Heart left ventricle (tissue), 16 donors: ENCODE measurements at regions of chr18 and their contacts with region 1.

Region 1: DNA sequence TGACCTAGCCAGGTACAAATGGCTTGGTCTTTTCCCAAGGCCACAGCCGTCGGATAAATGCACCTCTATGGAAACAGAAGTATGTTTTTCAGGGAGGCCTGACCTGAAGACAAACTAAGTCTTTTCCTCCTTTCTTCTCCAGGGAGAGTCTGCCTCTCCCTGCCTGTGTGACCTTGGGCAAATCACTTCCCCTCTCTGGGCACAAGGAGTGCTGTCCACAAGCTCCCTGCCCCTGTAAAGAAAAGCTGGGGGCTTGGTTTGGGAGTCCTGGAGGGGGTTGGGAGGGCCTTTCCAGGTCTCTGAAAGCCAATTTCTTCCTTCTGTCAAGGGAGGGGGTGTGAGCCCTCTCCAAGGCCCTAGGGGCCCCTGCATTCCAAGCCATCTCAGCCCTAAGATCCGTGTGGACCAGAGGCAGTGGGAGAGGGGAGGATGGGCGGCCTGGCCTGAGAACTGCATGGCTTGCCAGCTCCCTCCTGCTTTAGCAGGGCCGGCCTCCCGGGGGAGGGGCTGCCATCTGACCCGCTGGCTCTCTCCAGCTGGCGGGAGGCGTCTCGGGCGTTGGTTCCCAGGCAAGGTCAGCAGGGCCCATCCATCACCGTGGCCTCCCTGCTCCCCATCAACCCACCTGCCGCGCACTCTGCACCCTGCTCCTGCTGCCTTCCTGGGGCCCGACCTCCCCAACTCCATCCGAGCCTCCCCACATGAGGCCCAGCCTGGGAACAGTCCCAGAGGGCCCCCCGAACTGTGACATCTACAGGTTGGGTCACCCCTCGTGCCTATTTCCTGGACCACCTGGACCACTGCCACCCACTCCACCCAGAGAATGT is 61.4 kb downstream of the SMAD7 start:
- DNase-seq: peak in 3 of 5 donors; percentile 61 to 67 (median 65)
- ATAC-seq: peak in 3 of 4 donors; percentile 41 to 64 (median 53)
- H3K4me3 ChIP-seq: no peak overlapping the region
- H3K27ac ChIP-seq: peak overlapping the region in 1 of 12 donors; percentile 19
- H3K4me1 ChIP-seq: peaks cover 0 to 40% (median 19%) of the 10 kb centered on the region in 12 donors
- H3K27me3 ChIP-seq: no peaks in the 10 kb centered on the region
- CTCF ChIP-seq: no peak
- POLR2A ChIP-seq: no peak

Region 2: DNA sequence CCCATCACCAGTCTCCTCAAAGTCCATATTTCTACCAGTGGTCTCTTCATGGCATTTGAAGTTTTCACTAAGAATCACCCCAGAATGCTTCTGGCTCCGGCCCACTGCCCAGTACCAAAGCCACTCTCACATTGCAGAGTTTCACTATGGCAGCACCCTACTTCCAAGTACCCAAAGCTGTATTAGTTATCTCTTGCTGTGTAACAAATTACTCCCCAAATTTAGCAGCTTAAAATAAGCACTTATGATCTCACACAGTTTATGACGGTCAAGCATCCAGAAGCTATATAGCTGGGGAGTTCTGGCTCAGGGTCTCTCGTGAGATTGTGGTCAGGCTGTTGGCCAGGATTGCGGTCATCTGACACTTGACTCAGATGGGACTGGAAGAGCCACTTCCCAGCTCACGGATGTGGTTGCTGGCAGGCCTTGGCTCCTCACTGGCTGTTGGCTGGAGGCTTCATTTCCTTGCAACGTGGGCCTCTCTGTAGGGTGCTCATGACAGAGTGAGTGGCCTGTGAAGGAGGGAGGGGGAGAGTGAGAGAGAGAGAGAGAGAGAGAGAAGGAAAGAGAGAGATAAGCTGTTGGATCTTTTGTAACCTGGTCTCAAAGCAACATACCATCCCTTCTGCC is 161.0 kb before region 1 on chr18:
- intact Hi-C with region 1: no loop called
- DNase-seq: peak in 3 of 5 donors; percentile 46 to 67 (median 53)
- ATAC-seq: peak; percentile 6 to 79 (median 71)
- H3K4me3 ChIP-seq: no peak overlapping the region
- H3K27ac ChIP-seq: peak overlapping the region in 5 of 12 donors; percentile 13 to 79 (median 67)
- H3K4me1 ChIP-seq: peaks cover 0 to 31% (median 19%) of the 10 kb centered on the region in 12 donors
- H3K27me3 ChIP-seq: no peaks in the 10 kb centered on the region
- CTCF ChIP-seq: no peak
- POLR2A ChIP-seq: no peak

Region 3: DNA sequence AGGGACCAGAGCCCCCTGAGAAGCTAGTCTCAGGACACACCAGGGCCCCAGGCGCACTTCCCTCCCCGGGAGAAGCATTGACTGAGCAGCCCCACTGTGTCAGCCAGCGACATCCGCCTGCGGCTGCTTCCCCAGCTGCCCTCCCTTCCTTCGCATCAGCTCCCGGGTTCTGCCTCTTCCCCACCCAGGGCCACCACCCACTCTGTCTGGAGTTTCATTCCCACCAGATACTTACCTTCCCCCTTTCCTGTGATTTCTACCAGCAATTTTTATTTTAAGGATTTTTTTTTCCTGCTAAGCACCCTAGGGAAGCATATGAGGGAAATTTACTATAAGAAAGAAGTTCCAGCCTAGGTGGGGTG is 37.7 kb before region 1 on chr18:
- intact Hi-C with region 1: loop called in 1 of 10 experiments (anchors 5 kb)
- DNase-seq: peak; percentile 79 to 83 (median 82)
- ATAC-seq: peak; percentile 52 to 83 (median 75)
- H3K4me3 ChIP-seq: peak overlapping the region in 3 of 12 donors; percentile 13 to 15 (median 14)
- H3K27ac ChIP-seq: peak overlapping the region; percentile 53 to 95 (median 88)
- H3K4me1 ChIP-seq: peaks cover 5 to 65% (median 43%) of the 10 kb centered on the region in 12 donors
- H3K27me3 ChIP-seq: no peaks in the 10 kb centered on the region
- CTCF ChIP-seq: no peak
- POLR2A ChIP-seq: no peak

Region 4: DNA sequence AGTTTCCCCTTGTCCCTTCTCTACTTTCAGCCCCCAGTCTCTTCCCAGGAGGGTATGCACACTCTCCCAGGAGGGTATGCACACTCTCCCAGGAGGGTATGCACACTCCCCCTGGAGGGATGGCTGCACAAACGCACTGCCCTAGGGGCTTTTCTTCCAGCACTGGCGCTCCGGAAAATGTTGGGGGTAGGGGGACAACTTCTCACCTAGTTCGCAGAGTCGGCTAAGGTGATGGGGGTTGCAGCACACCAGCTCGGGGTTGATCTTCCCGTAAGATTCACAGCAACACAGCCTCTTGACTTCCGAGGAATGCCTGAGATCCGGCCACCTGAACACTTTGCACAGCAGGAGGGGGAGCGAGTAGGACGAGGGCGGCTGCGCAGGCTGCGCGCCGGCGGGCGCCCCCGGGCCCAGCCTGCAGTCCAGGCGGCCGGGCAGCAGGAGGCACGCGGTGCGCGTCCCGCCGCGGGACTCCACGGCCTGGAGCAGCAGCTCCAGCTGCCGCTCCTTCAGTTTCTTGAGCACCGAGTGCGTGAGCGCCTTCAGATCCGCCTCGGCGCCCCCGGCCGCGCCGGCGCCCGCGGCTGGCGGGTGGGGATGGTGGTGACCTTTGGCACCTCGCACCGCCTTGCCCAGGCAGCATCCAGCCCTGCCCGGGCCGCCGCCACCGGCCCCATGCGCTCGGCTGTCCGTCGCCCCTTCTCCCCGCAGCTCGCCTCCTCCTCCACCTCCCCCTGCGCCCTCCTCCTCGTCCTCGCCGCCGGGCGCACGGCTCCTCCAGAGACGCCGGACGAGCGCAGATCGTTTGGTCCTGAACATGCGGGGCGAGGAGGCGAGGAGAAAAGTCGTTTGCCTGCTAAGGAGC is 60.5 kb after region 1 on chr18:
- intact Hi-C with region 1: no loop called
- DNase-seq: peak in 1 of 5 donors; percentile 54
- ATAC-seq: peak in 1 of 4 donors; percentile 36
- H3K4me3 ChIP-seq: peak overlapping the region; percentile 72 to 98 (median 90)
- H3K27ac ChIP-seq: peak overlapping the region; percentile 95 to 100 (median 98)
- H3K4me1 ChIP-seq: peaks cover 0 to 57% (median 40%) of the 10 kb centered on the region in 12 donors
- H3K27me3 ChIP-seq: peaks cover 0 to 6% (median 0%) of the 10 kb centered on the region in 9 donors
- CTCF ChIP-seq: peak in 6 of 12 donors; percentile 6 to 34 (median 18)
- POLR2A ChIP-seq: peak in 1 of 2 donors; percentile 10

Region 5: DNA sequence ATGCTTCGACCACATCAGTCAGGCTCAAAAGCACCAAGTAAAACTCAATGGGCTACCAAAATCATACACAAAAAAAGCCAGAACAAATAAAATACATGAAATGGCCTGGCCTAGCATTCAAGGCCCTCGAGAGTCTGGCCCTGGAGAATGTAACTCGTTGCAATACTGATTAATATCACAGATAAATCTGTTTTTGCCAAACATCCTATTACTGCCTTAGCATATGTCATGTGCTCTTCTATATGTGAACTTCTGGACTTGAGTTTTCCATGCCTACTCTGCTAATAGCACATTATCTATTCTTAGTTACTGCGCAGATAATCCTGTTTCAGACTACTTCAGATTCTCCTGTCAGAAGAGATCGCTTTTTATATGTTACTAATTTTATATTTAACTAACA is 312.1 kb after region 1 on chr18:
- intact Hi-C with region 1: no loop called
- DNase-seq: no peak
- ATAC-seq: no peak
- H3K4me3 ChIP-seq: no peak overlapping the region
- H3K27ac ChIP-seq: no peak overlapping the region
- H3K4me1 ChIP-seq: peaks cover 0 to 9% (median 0%) of the 10 kb centered on the region in 12 donors
- H3K27me3 ChIP-seq: no peaks in the 10 kb centered on the region
- CTCF ChIP-seq: no peak
- POLR2A ChIP-seq: no peak